CD14-positive monocyte (primary cell): ENCODE measurements at regions of chr11 and their contacts with region 1.

Region 1: GRCh38 chr11:16785520-16786128 is 47.2 kb downstream of the C11orf58 start:
- DNase-seq: peak; percentile 63 to 76 (median 67)
- H3K4me3 ChIP-seq: no peak overlapping the region
- H3K4me3 Mint-ChIP-seq: no peak overlapping the region
- H3K27ac ChIP-seq: no peak overlapping the region
- H3K27ac Mint-ChIP-seq: peak overlapping the region in 2 of 7 donors; percentile 47 to 80
- H3K4me1 ChIP-seq: peaks cover 9 to 16% of the 10 kb centered on the region in 2 donors
- H3K4me1 Mint-ChIP-seq: peaks cover 25% of the 10 kb centered on the region
- H3K27me3 ChIP-seq: no peaks in the 10 kb centered on the region
- H3K27me3 Mint-ChIP-seq: no peaks in the 10 kb centered on the region
- CTCF ChIP-seq: peak; percentile 86

Region 2: GRCh38 chr11:16871368-16871767 is 85.7 kb after region 1 on chr11:
- intact Hi-C with region 1: loop called in 1 of 2 experiments (anchors 10 kb)
- DNase-seq: no peak
- H3K4me3 ChIP-seq: no peak overlapping the region
- H3K4me3 Mint-ChIP-seq: no peak overlapping the region
- H3K27ac ChIP-seq: no peak overlapping the region
- H3K27ac Mint-ChIP-seq: no peak overlapping the region
- H3K4me1 ChIP-seq: no peaks in the 10 kb centered on the region
- H3K4me1 Mint-ChIP-seq: no peaks in the 10 kb centered on the region
- H3K27me3 ChIP-seq: no peaks in the 10 kb centered on the region
- H3K27me3 Mint-ChIP-seq: peaks cover 5 to 8% (median 5%) of the 10 kb centered on the region in 3 donors
- CTCF ChIP-seq: no peak

Region 3: GRCh38 chr11:16881074-16881709 is 95.6 kb after region 1 on chr11:
- intact Hi-C with region 1: loop called (anchors 5 to 10 kb)
- DNase-seq: no peak
- H3K4me3 ChIP-seq: no peak overlapping the region
- H3K4me3 Mint-ChIP-seq: no peak overlapping the region
- H3K27ac ChIP-seq: no peak overlapping the region
- H3K27ac Mint-ChIP-seq: no peak overlapping the region
- H3K4me1 ChIP-seq: no peaks in the 10 kb centered on the region
- H3K4me1 Mint-ChIP-seq: peaks cover 2% of the 10 kb centered on the region
- H3K27me3 ChIP-seq: no peaks in the 10 kb centered on the region
- H3K27me3 Mint-ChIP-seq: peaks cover 0 to 1% (median 0%) of the 10 kb centered on the region in 3 donors
- CTCF ChIP-seq: no peak

Region 4: GRCh38 chr11:17063171-17064002 is 277.8 kb after region 1 on chr11:
- intact Hi-C with region 1: loop called (anchors 5 kb)
- DNase-seq: peak; percentile 29 to 42 (median 32)
- H3K4me3 ChIP-seq: no peak overlapping the region
- H3K4me3 Mint-ChIP-seq: no peak overlapping the region
- H3K27ac ChIP-seq: no peak overlapping the region
- H3K27ac Mint-ChIP-seq: no peak overlapping the region
- H3K4me1 ChIP-seq: no peaks in the 10 kb centered on the region
- H3K4me1 Mint-ChIP-seq: no peaks in the 10 kb centered on the region
- H3K27me3 ChIP-seq: no peaks in the 10 kb centered on the region
- H3K27me3 Mint-ChIP-seq: peaks cover 3 to 5% (median 4%) of the 10 kb centered on the region in 3 donors
- CTCF ChIP-seq: peak; percentile 71